Activated CD8-positive, alpha-beta T cell treated with anti-CD3 and anti-CD28 coated beads for 36 hours (primary cell): ENCODE measurements at regions of chr4 and their contacts with region 1.

Region 1: DNA sequence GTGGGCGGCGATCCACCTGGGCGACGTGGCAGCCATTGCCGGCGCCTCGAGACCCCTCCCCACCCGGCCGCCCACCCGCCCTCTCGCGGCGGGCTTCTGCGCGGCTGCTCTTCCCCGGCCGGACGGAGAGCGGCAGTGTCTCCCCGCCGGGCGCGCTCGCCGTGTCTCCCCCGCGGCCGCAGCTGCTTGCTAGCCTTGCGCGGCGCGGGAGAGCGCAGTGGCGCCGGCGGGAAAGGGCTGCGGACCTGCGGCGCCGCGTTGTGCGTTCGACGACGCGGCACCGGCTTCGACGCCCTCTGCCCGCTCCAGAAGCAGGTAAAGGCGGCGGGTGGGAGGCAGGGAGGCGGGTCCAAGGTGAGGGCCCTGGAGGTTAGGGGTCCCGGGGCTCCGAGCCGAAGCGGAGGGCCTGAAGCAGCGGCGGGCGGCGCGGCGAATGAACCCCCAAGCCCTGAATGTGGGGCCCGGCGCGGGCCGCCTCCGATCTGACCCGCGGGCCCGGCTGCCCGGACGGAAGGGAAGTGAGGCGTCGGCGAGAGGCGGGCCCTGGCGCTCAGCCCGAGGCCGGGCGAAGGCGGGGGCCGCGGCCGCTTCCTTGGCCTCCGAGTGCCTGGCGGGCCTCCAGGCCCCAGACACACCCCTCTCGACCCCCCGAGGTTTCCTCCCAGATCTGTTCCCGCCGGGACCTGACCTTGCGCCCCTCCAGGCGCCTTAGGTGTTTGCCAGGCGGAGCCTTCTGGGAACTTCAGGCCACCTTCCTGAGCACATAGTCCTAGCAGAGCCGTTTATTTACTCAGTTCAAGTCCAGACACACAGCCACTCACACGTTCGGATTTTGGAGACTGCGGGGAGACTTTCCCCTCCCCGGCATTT is at the start of gene N4BP2:
- DNase-seq: peak; percentile 77
- ATAC-seq: peak; percentile 59
- H3K4me3 Mint-ChIP-seq: peak within 1 kb of the TSS; percentile 96
- H3K27ac Mint-ChIP-seq: peak within 1 kb of the TSS; percentile 97
- H3K4me1 Mint-ChIP-seq: peaks cover 32% of the 10 kb centered on the region
- H3K27me3 Mint-ChIP-seq: peaks cover 6% of the 10 kb centered on the region
- CTCF ChIP-seq: peak; percentile 75
- total RNA-seq, gene N4BP2: 17.4 to 17.5 TPM

Region 2: DNA sequence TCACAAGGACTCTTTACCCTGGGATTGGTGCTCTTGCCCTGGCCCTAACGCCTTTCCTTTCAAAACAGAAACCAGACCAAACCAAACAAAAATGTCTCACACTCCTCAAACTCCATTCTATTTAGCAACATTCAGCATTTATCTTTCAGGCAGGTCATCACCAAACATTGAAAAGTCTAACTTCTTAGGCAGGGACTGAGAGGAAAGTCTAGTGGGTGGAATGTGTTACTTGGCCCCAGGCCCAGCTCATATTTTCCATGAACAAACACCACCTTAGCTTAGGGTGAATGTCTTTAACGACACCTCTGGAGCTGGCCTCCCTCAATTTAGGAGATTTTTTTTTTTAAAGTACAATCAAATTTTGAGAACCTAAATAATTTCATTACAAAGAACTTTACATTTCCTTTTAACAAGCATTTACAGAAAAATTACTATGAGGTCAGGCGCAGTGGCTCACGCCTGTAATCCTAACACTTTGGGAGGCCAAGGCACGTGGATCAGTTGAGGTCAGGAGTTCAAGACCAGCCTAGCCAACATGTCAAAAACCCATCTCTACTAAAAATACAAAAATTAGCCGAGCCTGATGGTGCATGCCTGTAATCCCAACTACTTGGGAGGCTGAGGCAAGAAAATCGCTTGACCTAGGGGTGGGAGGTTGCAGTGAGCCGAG is 10.5 kb before region 1 on chr4:
- CTCF ChIA-PET with region 1: interaction called, 4 read pairs
- POLR2A ChIA-PET with region 1: interaction called, 24 read pairs
- intact Hi-C with region 1: no loop called
- DNase-seq: peak; percentile 83
- ATAC-seq: peak; percentile 86
- H3K4me3 Mint-ChIP-seq: peak overlapping the region; percentile 13
- H3K27ac Mint-ChIP-seq: peak overlapping the region; percentile 90
- H3K4me1 Mint-ChIP-seq: peaks cover 14% of the 10 kb centered on the region
- H3K27me3 Mint-ChIP-seq: peaks cover 2% of the 10 kb centered on the region
- CTCF ChIP-seq: no peak

Region 3: GRCh38 chr4:40205259-40206198 is 148.6 kb after region 1 on chr4:
- CTCF ChIA-PET with region 1: interaction called, 3 read pairs
- POLR2A ChIA-PET with region 1: interaction called, 17 read pairs
- intact Hi-C with region 1: no loop called
- DNase-seq: peak; percentile 65
- ATAC-seq: peak; percentile 52
- H3K4me3 Mint-ChIP-seq: peak overlapping the region; percentile 99
- H3K27ac Mint-ChIP-seq: peak overlapping the region; percentile 99
- H3K4me1 Mint-ChIP-seq: peaks cover 35% of the 10 kb centered on the region
- H3K27me3 Mint-ChIP-seq: no peaks in the 10 kb centered on the region
- CTCF ChIP-seq: no peak